MCF 10A (cell line): ENCODE measurements at regions of chr15 and their contacts with region 1.

Region 1: GRCh38 chr15:65869127-65869953 is at the start of gene RAB11A:
- DNase-seq: peak; percentile 96
- H3K4me3 Mint-ChIP-seq: peak within 1 kb of the TSS; percentile 99
- H3K27ac Mint-ChIP-seq: peak within 1 kb of the TSS; percentile 99
- H3K4me1 Mint-ChIP-seq: peaks cover 5% of the 10 kb centered on the region
- H3K27me3 Mint-ChIP-seq: no peaks in the 10 kb centered on the region
- CTCF ChIP-seq: peak; percentile 13
- total RNA-seq, gene RAB11A: 139 and 164 TPM in 2 replicates

Region 2: DNA sequence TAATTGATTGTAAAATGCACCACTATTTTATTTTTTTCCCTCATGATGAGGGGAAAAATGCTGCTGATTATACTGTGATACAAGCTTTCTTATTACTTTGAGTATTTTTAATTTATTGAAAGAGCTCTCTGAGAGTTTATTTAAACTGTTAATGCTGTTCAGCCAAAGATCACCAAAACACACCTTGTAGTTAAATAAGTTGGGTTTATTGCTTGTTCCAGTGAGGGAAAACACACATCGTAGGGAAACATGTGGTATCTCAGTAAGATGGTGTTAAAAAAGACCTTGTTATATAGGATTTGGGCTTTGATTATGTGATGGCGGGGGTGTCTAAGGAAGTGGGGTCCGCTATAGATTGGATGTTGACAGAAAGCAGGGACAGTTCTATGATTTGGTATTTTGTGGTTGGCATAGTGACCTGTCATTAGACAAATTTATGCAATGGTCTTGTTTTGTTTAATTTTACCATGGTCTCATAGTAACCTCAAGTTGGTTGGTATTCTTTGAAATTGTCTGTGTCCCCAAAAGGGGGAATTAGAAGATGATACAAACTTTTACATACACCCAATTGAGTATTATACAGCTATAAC is 328.0 kb before region 1 on chr15:
- CTCF ChIA-PET with region 1: no interaction called
- POLR2A ChIA-PET with region 1: no interaction called
- intact Hi-C with region 1: no loop called
- DNase-seq: no peak
- H3K4me3 Mint-ChIP-seq: no peak overlapping the region
- H3K27ac Mint-ChIP-seq: no peak overlapping the region
- H3K4me1 Mint-ChIP-seq: peaks cover 12% of the 10 kb centered on the region
- H3K27me3 Mint-ChIP-seq: no peaks in the 10 kb centered on the region
- CTCF ChIP-seq: no peak

Region 3: GRCh38 chr15:65730549-65731172 is 138.7 kb before region 1 on chr15:
- CTCF ChIA-PET with region 1: interaction called, 3 read pairs
- POLR2A ChIA-PET with region 1: interaction called, 60 read pairs
- intact Hi-C with region 1: no loop called
- DNase-seq: peak; percentile 66
- H3K4me3 Mint-ChIP-seq: peak overlapping the region; percentile 38
- H3K27ac Mint-ChIP-seq: peak overlapping the region; percentile 84
- H3K4me1 Mint-ChIP-seq: peaks cover 17% of the 10 kb centered on the region
- H3K27me3 Mint-ChIP-seq: no peaks in the 10 kb centered on the region
- CTCF ChIP-seq: no peak

Region 4: GRCh38 chr15:65792130-65792987 is 77.0 kb before region 1 on chr15 and contains the start of gene DENND4A:
- CTCF ChIA-PET with region 1: interaction called, 4 read pairs
- POLR2A ChIA-PET with region 1: interaction called, 89 read pairs
- intact Hi-C with region 1: no loop called
- DNase-seq: peak; percentile 98
- H3K4me3 Mint-ChIP-seq: peak within 1 kb of the TSS; percentile 81
- H3K27ac Mint-ChIP-seq: peak within 1 kb of the TSS; percentile 94
- H3K4me1 Mint-ChIP-seq: peaks cover 33% of the 10 kb centered on the region
- H3K27me3 Mint-ChIP-seq: no peaks in the 10 kb centered on the region
- CTCF ChIP-seq: no peak
- total RNA-seq, gene DENND4A: 16.9 and 18.1 TPM in 2 replicates

Region 5: GRCh38 chr15:65824031-65824743 is 45.2 kb before region 1 on chr15:
- CTCF ChIA-PET with region 1: interaction called, 4 read pairs
- POLR2A ChIA-PET with region 1: interaction called, 21 read pairs
- intact Hi-C with region 1: no loop called
- DNase-seq: peak; percentile 76
- H3K4me3 Mint-ChIP-seq: no peak overlapping the region
- H3K27ac Mint-ChIP-seq: no peak overlapping the region
- H3K4me1 Mint-ChIP-seq: peaks cover 4% of the 10 kb centered on the region
- H3K27me3 Mint-ChIP-seq: no peaks in the 10 kb centered on the region
- CTCF ChIP-seq: peak; percentile 31

Region 6: GRCh38 chr15:65856821-65857455 is 12.4 kb before region 1 on chr15:
- CTCF ChIA-PET with region 1: interaction called, 19 read pairs
- POLR2A ChIA-PET with region 1: interaction called, 19 read pairs
- intact Hi-C with region 1: no loop called
- DNase-seq: peak; percentile 80
- H3K4me3 Mint-ChIP-seq: no peak overlapping the region
- H3K27ac Mint-ChIP-seq: no peak overlapping the region
- H3K4me1 Mint-ChIP-seq: no peaks in the 10 kb centered on the region
- H3K27me3 Mint-ChIP-seq: peaks cover 17% of the 10 kb centered on the region
- CTCF ChIP-seq: peak; percentile 73